ENCODE measurements at regions of chr14 and their contacts with region 1.

Region 1: GRCh38 chr14:77301103-77301502 is 19.6 kb downstream of the POMT2 start:
- DNase-seq: peak; percentile 56 to 69
- ATAC-seq: peak; percentile 28 to 78 (median 65)
- H3K4me3 ChIP-seq: no peak overlapping the region
- H3K27ac ChIP-seq: no peak overlapping the region
- H3K4me1 ChIP-seq: peaks cover 0 to 30% (median 0%) of the 10 kb centered on the region in 9 donors
- H3K27me3 ChIP-seq: no peaks in the 10 kb centered on the region
- CTCF ChIP-seq: peak; percentile 29 to 75 (median 60)

Region 2: DNA sequence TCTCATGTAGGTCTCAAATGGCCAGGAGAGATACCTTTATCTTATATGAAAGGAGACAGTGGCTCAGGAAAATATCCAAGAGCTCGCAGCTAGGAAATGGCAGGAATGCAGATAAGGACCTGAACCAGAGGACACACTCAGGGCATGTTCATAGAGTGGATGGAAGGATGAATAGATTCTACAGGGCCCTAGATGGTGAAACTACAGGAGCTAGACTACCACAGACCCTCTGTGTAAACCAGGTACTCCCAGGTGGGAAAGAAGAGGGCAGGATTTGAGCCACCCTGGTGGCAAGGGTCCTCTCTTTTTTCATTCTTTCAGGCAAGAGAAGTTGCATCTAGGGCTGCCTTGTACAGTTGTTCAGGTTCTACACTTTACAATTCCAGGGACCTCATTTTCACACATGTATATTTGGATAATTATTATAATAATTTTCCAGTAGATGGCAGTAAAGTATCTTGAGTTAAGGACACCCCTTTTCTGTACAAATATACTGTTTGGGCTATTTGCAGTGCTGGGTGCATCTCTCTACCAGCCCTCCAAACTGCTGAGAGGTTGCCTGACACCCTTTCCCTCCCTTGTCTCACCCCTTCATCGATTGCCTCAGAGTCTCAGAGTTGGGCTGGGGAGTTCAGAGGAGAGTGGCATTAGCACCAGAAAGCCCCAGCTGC is 149.1 kb before region 1 on chr14:
- intact Hi-C with region 1: loop called in 1 of 10 experiments (anchors 10 kb)
- DNase-seq: no peak
- ATAC-seq: peak in 4 of 8 donors; percentile 25 to 57 (median 45)
- H3K4me3 ChIP-seq: no peak overlapping the region
- H3K27ac ChIP-seq: no peak overlapping the region
- H3K4me1 ChIP-seq: peaks cover 0 to 14% (median 0%) of the 10 kb centered on the region in 9 donors
- H3K27me3 ChIP-seq: peaks cover 0 to 45% (median 32%) of the 10 kb centered on the region in 7 donors
- CTCF ChIP-seq: peak in 5 of 9 donors; percentile 26 to 42 (median 31)

Measured in heart right ventricle (tissue), 16 donors.